T-cell (primary cell): ENCODE measurements at regions of chr3 and their contacts with region 1.

Region 1: GRCh38 chr3:4978204-4978965 is 852 bp upstream of the BHLHE40 start:
- DNase-seq: peak; percentile 39 to 85 (median 64)
- ATAC-seq: peak; percentile 51 to 55 (median 52)
- H3K4me3 ChIP-seq: peak overlapping the region; percentile 73 to 90
- H3K4me3 Mint-ChIP-seq: peak overlapping the region; percentile 94 to 98 (median 95)
- H3K27ac ChIP-seq: peak overlapping the region; percentile 94
- H3K27ac Mint-ChIP-seq: peak overlapping the region; percentile 98
- H3K4me1 ChIP-seq: peaks cover 18 to 49% of the 10 kb centered on the region in 2 experiments
- H3K4me1 Mint-ChIP-seq: peaks cover 49 to 60% (median 59%) of the 10 kb centered on the region in 3 donors
- H3K27me3 ChIP-seq: no peaks in the 10 kb centered on the region
- H3K27me3 Mint-ChIP-seq: no peaks in the 10 kb centered on the region

Region 2: DNA sequence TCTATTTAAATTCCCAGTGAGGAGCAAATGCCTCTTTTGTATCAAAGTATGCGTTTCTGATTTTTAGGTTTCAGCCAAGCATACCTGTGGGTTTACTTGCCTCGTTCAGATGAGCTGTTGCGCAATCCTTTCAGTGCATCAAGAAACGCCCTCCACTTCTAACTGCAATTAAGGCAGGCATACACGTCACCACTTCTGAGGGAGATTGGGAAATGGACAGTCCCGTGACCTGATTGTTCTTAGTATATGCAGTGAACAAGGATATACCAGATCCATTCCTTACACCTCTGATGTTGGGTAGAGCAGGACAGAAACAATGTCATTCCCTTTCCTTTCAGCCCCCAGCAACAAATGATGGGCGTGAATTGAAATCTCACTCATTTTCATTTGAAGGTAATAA is 266.2 kb before region 1 on chr3:
- CTCF ChIA-PET with region 1: interaction called, 7 to 11 read pairs
- POLR2A ChIA-PET with region 1: no interaction called
- DNase-seq: no peak
- ATAC-seq: no peak
- H3K4me3 ChIP-seq: no peak overlapping the region
- H3K4me3 Mint-ChIP-seq: no peak overlapping the region
- H3K27ac ChIP-seq: no peak overlapping the region
- H3K27ac Mint-ChIP-seq: no peak overlapping the region
- H3K4me1 ChIP-seq: no peaks in the 10 kb centered on the region
- H3K4me1 Mint-ChIP-seq: peaks cover 0 to 6% (median 0%) of the 10 kb centered on the region in 3 donors
- H3K27me3 ChIP-seq: no peaks in the 10 kb centered on the region
- H3K27me3 Mint-ChIP-seq: no peaks in the 10 kb centered on the region

Region 3: DNA sequence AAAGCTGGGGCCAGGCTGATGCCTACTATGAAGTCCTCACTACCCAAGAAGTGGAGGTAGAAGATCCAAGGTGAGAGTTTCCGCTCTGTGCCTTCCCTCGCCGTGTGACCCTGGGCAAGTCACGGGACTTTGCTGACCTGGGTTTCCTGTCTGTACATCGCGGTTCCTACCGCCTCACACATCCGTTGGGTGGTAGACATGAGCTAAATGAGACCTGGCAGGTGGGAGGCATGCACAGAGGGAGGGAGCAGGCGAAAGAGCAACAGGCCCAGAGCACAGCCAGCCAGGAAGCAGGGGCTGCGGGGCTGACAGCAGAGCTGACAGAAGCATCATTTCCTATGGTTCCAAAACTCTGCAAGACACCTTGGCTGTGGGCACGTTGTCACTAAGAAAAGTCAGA is 156.4 kb before region 1 on chr3:
- CTCF ChIA-PET with region 1: interaction called, 5 to 16 read pairs
- POLR2A ChIA-PET with region 1: interaction called in 1 of 2 experiments, 22 read pairs
- DNase-seq: peak; percentile 45 to 92 (median 83)
- ATAC-seq: peak; percentile 92 to 96 (median 94)
- H3K4me3 ChIP-seq: no peak overlapping the region
- H3K4me3 Mint-ChIP-seq: peak overlapping the region; percentile 1 to 65 (median 3)
- H3K27ac ChIP-seq: peak overlapping the region; percentile 72
- H3K27ac Mint-ChIP-seq: peak overlapping the region; percentile 92 to 98
- H3K4me1 ChIP-seq: peaks cover 48 to 56% of the 10 kb centered on the region in 2 experiments
- H3K4me1 Mint-ChIP-seq: peaks cover 69 to 73% (median 71%) of the 10 kb centered on the region in 3 donors
- H3K27me3 ChIP-seq: no peaks in the 10 kb centered on the region
- H3K27me3 Mint-ChIP-seq: no peaks in the 10 kb centered on the region

Region 4: DNA sequence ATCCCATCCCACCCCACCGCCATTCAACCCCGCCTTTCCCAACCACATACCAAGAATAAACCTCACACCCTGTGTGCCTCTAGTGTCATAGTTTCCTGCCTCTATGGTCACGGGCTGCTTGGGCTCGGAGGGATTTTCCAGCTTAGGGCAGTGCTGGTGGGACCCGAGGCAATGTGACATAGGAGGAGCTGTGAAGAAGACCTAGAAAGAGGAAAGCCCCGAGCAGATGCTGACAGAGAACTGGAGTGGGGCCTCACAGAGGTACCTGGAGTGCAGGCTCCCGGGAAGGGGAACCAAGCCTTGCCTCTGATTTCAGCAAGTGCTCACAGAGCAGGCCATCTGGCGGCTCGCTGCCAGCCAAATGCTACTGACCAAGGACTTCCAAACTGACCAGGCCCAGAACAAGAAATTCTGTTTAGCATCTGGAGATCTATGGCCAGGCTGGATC is 28.4 kb after region 1 on chr3:
- CTCF ChIA-PET with region 1: interaction called in 1 of 2 experiments, 8 read pairs
- POLR2A ChIA-PET with region 1: interaction called, 3 to 10 read pairs
- DNase-seq: peak in 32 of 35 experiments; percentile 42 to 90 (median 69)
- ATAC-seq: peak; percentile 41 to 87 (median 46)
- H3K4me3 ChIP-seq: no peak overlapping the region
- H3K4me3 Mint-ChIP-seq: peak overlapping the region in 1 of 3 donors; percentile 15
- H3K27ac ChIP-seq: peak overlapping the region; percentile 19
- H3K27ac Mint-ChIP-seq: peak overlapping the region; percentile 72 to 77
- H3K4me1 ChIP-seq: peaks cover 0 to 46% of the 10 kb centered on the region in 2 experiments
- H3K4me1 Mint-ChIP-seq: peaks cover 28 to 49% (median 30%) of the 10 kb centered on the region in 3 donors
- H3K27me3 ChIP-seq: no peaks in the 10 kb centered on the region
- H3K27me3 Mint-ChIP-seq: no peaks in the 10 kb centered on the region

Region 5: GRCh38 chr3:5047764-5048163 is 69.4 kb after region 1 on chr3:
- CTCF ChIA-PET with region 1: interaction called in 1 of 2 experiments, 4 read pairs
- POLR2A ChIA-PET with region 1: interaction called in 1 of 2 experiments, 10 read pairs
- DNase-seq: no peak
- ATAC-seq: no peak
- H3K4me3 ChIP-seq: no peak overlapping the region
- H3K4me3 Mint-ChIP-seq: no peak overlapping the region
- H3K27ac ChIP-seq: no peak overlapping the region
- H3K27ac Mint-ChIP-seq: no peak overlapping the region
- H3K4me1 ChIP-seq: no peaks in the 10 kb centered on the region
- H3K4me1 Mint-ChIP-seq: no peaks in the 10 kb centered on the region
- H3K27me3 ChIP-seq: no peaks in the 10 kb centered on the region
- H3K27me3 Mint-ChIP-seq: peaks cover 0 to 1% of the 10 kb centered on the region in 2 donors

Region 6: GRCh38 chr3:5205165-5205941 is 227.0 kb after region 1 on chr3:
- CTCF ChIA-PET with region 1: no interaction called
- POLR2A ChIA-PET with region 1: no interaction called
- DNase-seq: no peak
- ATAC-seq: peak in 1 of 4 experiments; percentile 26
- H3K4me3 ChIP-seq: no peak overlapping the region
- H3K4me3 Mint-ChIP-seq: no peak overlapping the region
- H3K27ac ChIP-seq: no peak overlapping the region
- H3K27ac Mint-ChIP-seq: peak overlapping the region; percentile 71
- H3K4me1 ChIP-seq: peaks cover 0 to 2% of the 10 kb centered on the region in 2 experiments
- H3K4me1 Mint-ChIP-seq: peaks cover 23 to 30% (median 26%) of the 10 kb centered on the region in 3 donors
- H3K27me3 ChIP-seq: no peaks in the 10 kb centered on the region
- H3K27me3 Mint-ChIP-seq: no peaks in the 10 kb centered on the region